Heart right ventricle (tissue), 16 donors: ENCODE measurements at regions of chr14 and their contacts with region 1.

Region 1: GRCh38 chr14:90295870-90296516 is 35.7 kb downstream of the NRDE2 start:
- DNase-seq: no peak
- ATAC-seq: peak in 1 of 8 donors; percentile 57
- H3K4me3 ChIP-seq: no peak overlapping the region
- H3K27ac ChIP-seq: peak overlapping the region in 1 of 10 donors; percentile 85
- H3K4me1 ChIP-seq: peaks cover 0 to 56% (median 4%) of the 10 kb centered on the region in 9 donors
- H3K27me3 ChIP-seq: no peaks in the 10 kb centered on the region
- CTCF ChIP-seq: no peak

Region 2: GRCh38 chr14:90409209-90409730 is 113.3 kb after region 1 on chr14:
- intact Hi-C with region 1: no loop called
- DNase-seq: peak in 1 of 2 donors; percentile 81
- ATAC-seq: peak; percentile 82 to 96 (median 88)
- H3K4me3 ChIP-seq: no peak overlapping the region
- H3K27ac ChIP-seq: peak overlapping the region; percentile 30 to 90 (median 81)
- H3K4me1 ChIP-seq: peaks cover 5 to 48% (median 25%) of the 10 kb centered on the region in 9 donors
- H3K27me3 ChIP-seq: no peaks in the 10 kb centered on the region
- CTCF ChIP-seq: no peak

Region 3: GRCh38 chr14:90827916-90828610 is 532.1 kb after region 1 on chr14:
- intact Hi-C with region 1: loop called in 1 of 10 experiments (anchors 10 kb)
- DNase-seq: peak; percentile 94 to 95
- ATAC-seq: peak; percentile 98 to 100 (median 100)
- H3K4me3 ChIP-seq: peak overlapping the region in 9 of 10 donors; percentile 20 to 51 (median 45)
- H3K27ac ChIP-seq: peak overlapping the region in 9 of 10 donors; percentile 75 to 91 (median 84)
- H3K4me1 ChIP-seq: peaks cover 7 to 21% (median 14%) of the 10 kb centered on the region in 9 donors
- H3K27me3 ChIP-seq: no peaks in the 10 kb centered on the region
- CTCF ChIP-seq: no peak